ENCODE measurements at regions of chr1 and their contacts with region 1.

Region 1: GRCh38 chr1:68232354-68233148 is at the start of gene WLS:
- DNase-seq: peak; percentile 60
- H3K4me3 ChIP-seq: peak within 1 kb of the TSS; percentile 76
- H3K27ac ChIP-seq: peak within 1 kb of the TSS; percentile 73
- H3K27me3 ChIP-seq: no peaks in the 10 kb centered on the region
- CTCF ChIP-seq: peak; percentile 27; the same call in 1 of the 2 replicates
- polyA plus RNA-seq, gene WLS: 391 and 417 TPM in 2 replicates

Region 2: DNA sequence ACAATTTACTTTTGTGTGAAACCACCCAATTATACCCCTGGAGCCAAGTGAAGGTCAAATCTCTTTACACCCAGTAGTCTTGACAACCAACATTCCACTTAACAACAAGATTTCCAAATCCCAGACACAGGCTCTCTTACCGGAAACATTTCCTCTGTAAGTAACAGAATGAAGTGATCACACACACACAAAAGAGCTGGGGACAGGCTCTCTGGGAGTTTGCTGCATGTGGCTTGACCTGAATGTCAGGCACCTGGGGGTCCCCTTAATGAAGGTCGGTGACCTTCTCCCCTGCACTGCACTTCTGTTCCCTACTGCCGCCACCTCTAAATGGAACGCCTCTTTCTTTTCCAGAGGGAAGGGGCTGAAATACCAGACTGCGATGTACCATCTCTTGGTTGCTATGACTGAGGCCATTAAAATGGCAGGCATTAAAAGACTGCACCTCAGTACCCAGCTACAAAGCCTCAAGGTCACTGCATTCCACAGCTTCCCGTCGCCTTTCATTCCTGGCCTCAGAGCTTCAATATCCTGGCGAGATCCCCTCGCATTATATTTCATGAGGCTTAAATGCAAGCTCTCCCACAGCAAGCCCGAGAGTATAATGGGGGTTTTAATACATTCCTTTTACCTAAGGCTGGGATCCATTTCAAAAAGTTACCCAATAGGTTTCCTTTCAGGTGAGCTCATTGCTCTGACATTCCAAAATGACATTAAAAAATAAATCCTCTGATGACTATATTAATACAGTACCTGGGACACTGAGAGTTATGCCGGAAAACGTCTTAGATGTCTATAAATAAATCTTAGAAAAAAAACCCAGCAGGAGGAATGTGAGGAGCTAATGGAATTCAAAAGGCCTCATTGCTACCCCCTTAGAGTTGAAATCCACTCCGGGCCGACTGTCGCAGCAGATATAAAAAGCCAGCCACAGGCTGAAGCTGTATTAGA is 91.2 kb before region 1 on chr1:
- CTCF ChIA-PET with region 1: interaction called, 4 read pairs
- POLR2A ChIA-PET with region 1: interaction called, 14 read pairs
- DNase-seq: no peak
- H3K4me3 ChIP-seq: no peak overlapping the region
- H3K27ac ChIP-seq: peak overlapping the region; percentile 58
- H3K27me3 ChIP-seq: no peaks in the 10 kb centered on the region
- CTCF ChIP-seq: no peak

Region 3: GRCh38 chr1:68173911-68174737 is 58.4 kb before region 1 on chr1:
- CTCF ChIA-PET with region 1: no interaction called
- POLR2A ChIA-PET with region 1: interaction called, 37 read pairs
- DNase-seq: peak; percentile 94
- H3K4me3 ChIP-seq: peak overlapping the region; percentile 38
- H3K27ac ChIP-seq: peak overlapping the region; percentile 92
- H3K27me3 ChIP-seq: no peaks in the 10 kb centered on the region
- CTCF ChIP-seq: no peak

Region 4: DNA sequence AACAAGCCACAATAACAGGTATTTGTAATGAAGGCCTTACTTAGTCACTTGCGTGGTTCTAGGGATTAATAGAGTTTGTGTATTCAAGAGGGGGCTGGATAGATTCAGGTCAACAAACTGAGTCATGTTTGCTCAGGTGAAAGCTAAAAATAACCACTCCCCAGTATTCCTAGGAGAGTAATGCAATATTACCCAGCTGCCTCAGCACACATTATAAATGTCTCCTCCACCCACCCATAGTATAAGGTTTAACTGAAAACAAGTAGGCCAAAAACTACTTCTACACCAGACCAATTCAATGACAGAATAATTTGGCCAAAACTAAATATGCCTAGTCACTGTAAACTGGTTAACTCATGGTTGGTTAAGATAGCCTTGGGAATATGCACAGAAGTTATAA is 34.7 kb before region 1 on chr1:
- CTCF ChIA-PET with region 1: interaction called, 3 read pairs
- POLR2A ChIA-PET with region 1: interaction called, 14 read pairs
- DNase-seq: no peak
- H3K4me3 ChIP-seq: no peak overlapping the region
- H3K27ac ChIP-seq: no peak overlapping the region
- H3K27me3 ChIP-seq: no peaks in the 10 kb centered on the region
- CTCF ChIP-seq: no peak

Region 5: DNA sequence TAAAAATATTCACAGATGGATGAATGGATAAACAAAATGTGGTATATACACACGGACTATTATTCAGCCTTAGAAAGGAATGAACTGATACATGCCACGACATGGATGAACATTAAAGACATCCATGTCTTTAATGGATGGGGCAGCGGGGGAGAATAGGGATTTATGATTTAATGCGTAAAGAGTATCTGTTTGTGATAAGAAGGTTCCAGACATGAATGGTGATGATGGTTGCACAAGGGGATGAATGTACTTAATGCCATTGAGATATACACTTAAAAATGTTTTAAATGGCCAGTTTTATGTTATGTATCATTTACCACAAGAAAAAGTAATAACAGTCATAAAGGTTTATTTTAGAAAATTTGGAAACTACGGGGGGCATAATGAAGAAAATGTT is 108.4 kb after region 1 on chr1:
- CTCF ChIA-PET with region 1: interaction called, 20 read pairs
- POLR2A ChIA-PET with region 1: no interaction called
- DNase-seq: no peak
- H3K4me3 ChIP-seq: no peak overlapping the region
- H3K27ac ChIP-seq: no peak overlapping the region
- H3K27me3 ChIP-seq: no peaks in the 10 kb centered on the region
- CTCF ChIP-seq: no peak

Region 6: DNA sequence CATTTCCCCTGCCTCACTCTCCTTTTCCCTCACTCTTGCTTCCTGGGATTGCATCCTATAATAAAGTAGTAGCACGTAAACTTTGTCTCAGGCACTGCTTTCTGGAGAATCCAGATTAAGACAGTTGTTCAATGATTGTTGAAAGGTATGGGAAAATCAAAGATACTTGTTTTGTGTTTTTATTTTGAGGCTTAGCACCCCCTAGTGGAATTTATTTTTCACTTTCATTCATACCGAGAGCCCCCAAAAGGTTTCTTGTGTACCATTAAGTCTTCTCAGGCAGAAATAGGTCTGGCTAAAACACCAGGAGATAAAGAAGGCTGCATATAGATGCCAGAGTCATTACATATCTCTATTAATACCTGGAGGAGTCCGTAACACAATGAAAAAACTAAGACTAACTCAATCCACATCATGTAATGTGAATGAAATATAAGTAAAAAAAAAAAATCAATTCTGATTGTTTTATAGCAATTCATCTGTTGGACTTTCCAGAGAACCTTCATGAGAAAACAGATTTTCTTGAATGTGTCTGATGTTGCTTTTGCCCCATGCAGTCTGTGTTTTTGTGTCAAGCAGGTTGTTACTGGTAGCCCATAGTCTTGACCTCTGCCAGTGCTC is 113.7 kb after region 1 on chr1:
- CTCF ChIA-PET with region 1: interaction called, 20 read pairs
- POLR2A ChIA-PET with region 1: no interaction called
- DNase-seq: no peak
- H3K4me3 ChIP-seq: no peak overlapping the region
- H3K27ac ChIP-seq: no peak overlapping the region
- H3K27me3 ChIP-seq: no peaks in the 10 kb centered on the region
- CTCF ChIP-seq: peak; percentile 57